ENCODE measurements at regions of chr3 and their contacts with region 1.

Region 1: DNA sequence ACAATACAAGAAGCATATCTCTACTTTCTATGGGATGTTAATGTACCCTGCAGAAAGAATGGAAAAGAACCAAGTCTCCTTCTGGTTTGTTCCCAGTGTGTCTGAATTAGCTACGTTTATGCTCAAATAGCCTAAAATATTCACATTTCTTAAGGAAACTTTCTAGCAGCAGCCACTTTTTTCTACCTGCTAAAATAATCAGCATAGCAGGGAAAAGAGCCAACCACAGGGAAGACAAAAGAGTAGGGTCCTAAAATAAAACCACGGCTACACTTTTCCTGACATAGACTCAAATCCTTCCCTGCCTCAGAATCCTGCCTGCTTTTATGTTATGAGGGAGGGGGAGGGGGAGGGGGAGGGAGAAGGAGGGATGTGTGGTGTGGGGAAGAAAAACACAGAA is 136.7 kb downstream of the GBE1 start:
- DNase-seq: no peak
- H3K4me3 ChIP-seq: no peak overlapping the region
- H3K27ac ChIP-seq: no peak overlapping the region
- H3K4me1 ChIP-seq: no peaks in the 10 kb centered on the region
- H3K27me3 ChIP-seq: no peaks in the 10 kb centered on the region
- CTCF ChIP-seq: no peak
- POLR2A ChIP-seq: no peak

Region 2: DNA sequence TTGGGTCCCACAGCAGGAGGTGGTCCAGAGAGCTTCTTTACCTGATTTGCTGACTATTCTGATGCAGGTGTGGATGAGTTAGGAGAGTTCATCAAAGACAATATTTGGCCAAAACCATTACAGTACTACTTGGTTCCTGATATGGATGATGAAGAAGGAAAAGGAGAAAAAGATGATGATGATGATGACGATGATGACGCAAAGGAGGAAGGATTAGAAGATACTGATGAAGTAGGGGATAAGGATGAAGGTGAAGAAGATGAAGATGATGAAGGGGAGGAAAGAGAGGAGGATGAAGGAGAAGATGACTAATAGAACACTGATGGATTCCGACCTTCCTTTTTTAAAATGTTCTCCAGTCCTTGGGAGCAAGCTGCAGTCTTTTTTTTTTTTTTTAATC is 12.0 kb before region 1 on chr3:
- intact Hi-C with region 1: loop called (anchors 1 kb)
- DNase-seq: no peak
- H3K4me3 ChIP-seq: no peak overlapping the region
- H3K27ac ChIP-seq: no peak overlapping the region
- H3K4me1 ChIP-seq: no peaks in the 10 kb centered on the region
- H3K27me3 ChIP-seq: no peaks in the 10 kb centered on the region
- CTCF ChIP-seq: no peak
- POLR2A ChIP-seq: no peak

Region 3: DNA sequence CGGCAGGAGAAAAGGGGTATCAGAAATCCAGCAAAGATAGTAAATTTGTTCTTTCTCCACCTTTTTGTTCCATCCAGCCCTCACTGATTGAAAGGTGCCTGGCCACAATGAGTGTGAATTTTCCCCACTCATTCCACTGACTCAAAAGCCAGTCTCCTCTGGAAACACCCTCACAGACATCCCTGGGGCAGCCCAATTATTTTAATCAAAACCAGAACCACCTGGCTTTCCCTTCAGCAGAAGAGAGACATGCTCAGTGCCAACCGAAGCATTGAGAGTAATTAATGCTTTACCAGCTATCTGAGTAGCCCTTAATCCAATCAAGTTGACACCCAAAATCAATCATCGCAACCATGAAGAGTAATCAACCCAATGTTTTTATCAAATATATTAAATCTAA is 1266.3 kb after region 1 on chr3:
- intact Hi-C with region 1: loop called (anchors 5 kb)
- DNase-seq: no peak
- H3K4me3 ChIP-seq: no peak overlapping the region
- H3K27ac ChIP-seq: no peak overlapping the region
- H3K4me1 ChIP-seq: no peaks in the 10 kb centered on the region
- H3K27me3 ChIP-seq: no peaks in the 10 kb centered on the region
- CTCF ChIP-seq: no peak
- POLR2A ChIP-seq: no peak